ENCODE measurements at regions of chr14 and their contacts with region 1.

Region 1: GRCh38 chr14:92456215-92457015 is 57.2 kb upstream of the RIN3 start:
- DNase-seq: peak; percentile 50 to 78 (median 72)
- H3K4me3 ChIP-seq: no peak overlapping the region
- H3K27ac ChIP-seq: peak overlapping the region in 1 of 5 donors; percentile 38
- H3K4me1 ChIP-seq: no peaks in the 10 kb centered on the region
- H3K27me3 ChIP-seq: no peaks in the 10 kb centered on the region
- CTCF ChIP-seq: peak; percentile 39 to 80 (median 74)
- POLR2A ChIP-seq: no peak

Region 2: GRCh38 chr14:92144708-92145107 is 311.7 kb before region 1 on chr14:
- intact Hi-C with region 1: loop called in 1 of 2 experiments (anchors 10 kb)
- DNase-seq: no peak
- H3K4me3 ChIP-seq: no peak overlapping the region
- H3K27ac ChIP-seq: no peak overlapping the region
- H3K4me1 ChIP-seq: no peaks in the 10 kb centered on the region
- H3K27me3 ChIP-seq: no peaks in the 10 kb centered on the region
- CTCF ChIP-seq: no peak
- POLR2A ChIP-seq: no peak